ENCODE measurements at regions of chr3 and their contacts with region 1.

Region 1: GRCh38 chr3:184289426-184289938 is 9.6 kb upstream of the PSMD2 start:
- DNase-seq: peak; percentile 59
- H3K4me3 ChIP-seq: no peak overlapping the region
- H3K27ac ChIP-seq: no peak overlapping the region
- H3K4me1 ChIP-seq: no peaks in the 10 kb centered on the region
- H3K27me3 ChIP-seq: no peaks in the 10 kb centered on the region
- CTCF ChIP-seq: peak; percentile 60 to 77

Region 2: DNA sequence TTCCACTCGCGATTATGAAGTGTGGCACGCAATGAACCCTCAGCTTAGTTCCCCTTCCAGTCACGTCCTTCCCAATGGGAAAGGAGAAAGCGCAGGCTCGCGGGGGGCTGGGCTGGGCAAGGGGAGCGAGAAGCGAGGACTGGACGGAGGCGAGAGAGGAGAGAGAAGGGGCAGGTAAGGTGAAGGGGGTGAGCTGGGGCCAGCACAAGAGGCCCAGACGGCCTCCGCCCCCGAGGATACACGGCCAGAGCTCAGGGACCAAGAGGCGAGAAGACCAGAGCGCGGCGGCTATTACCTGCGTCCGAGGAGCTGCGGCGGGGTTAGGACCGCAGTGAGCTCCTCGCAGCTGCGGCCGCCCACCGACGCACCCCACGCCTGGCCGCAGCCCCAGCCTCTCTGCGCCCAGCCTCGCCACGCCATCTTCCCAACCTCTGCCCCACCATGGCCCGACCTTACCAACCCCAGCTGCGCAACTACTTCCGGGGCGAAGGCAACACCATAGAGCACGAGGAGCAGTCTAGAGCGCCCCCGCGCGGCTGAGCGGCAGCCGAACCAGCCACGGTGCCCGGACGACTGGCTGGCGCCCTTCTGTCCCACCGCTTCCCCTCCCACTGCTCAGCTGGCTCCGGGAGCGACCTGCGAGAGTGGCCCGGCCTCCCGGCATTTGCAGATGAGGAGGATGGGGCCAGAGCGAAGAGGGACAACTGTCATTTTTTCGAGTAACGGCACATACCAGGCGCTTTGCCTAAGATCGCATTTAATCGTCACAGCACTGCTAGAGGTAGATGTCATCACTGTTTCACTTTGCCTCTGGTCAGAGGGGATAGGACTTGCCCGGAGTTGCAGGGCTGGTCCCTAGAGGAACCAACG is 404.8 kb before region 1 on chr3 and contains the start of gene PARL:
- CTCF ChIA-PET with region 1: no interaction called
- dilution Hi-C with region 1: no loop called
- in situ Hi-C with region 1: no loop called
- intact Hi-C with region 1: loop called (anchors 2 kb)
- DNase-seq: peak; percentile 84
- H3K4me3 ChIP-seq: peak within 1 kb of the TSS; percentile 76 to 98 (median 93)
- H3K27ac ChIP-seq: peak within 1 kb of the TSS; percentile 60
- H3K4me1 ChIP-seq: peaks cover 7% of the 10 kb centered on the region
- H3K27me3 ChIP-seq: no peaks in the 10 kb centered on the region
- CTCF ChIP-seq: peak; percentile 72 to 95
- total RNA-seq, gene PARL: 33.0 to 70.4 TPM

Region 3: DNA sequence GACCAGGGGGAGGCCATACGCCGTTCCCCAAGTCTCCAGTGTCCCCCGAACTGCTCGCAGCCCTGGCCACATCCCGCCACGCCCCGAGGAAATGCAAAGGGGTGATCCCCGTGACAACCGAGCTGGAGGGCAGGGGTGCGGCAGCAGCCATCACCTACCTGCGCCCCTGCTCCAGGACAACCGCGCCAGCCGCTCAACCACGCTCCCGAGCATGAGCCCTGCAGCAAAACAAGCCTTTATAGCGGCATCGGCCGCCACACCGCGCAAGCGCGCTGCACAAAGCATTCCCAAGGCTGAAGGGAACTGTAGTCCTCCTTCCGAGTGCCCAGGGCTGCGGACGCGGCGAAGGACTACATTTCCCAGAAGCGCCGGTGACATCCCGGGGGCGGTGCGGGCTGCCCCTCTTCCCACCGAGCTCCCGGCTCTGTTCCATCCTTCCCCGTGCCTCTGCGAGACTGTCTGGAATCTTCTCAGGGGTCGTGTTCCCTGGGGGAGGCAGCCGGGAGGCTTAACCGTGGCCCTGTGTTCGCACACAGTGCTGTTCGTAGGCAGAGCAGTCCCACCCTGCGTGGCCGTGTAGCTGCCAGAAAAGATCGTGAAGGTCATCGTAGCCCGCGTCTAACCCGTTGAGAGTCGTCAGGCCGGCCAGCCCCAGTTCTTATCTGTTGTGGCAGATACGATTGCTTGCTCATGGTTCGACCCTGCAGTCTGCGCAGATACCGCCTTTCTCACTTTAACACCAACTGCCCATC is 271.6 kb before region 1 on chr3 and contains the start of gene ABCC5:
- CTCF ChIA-PET with region 1: no interaction called
- dilution Hi-C with region 1: no loop called
- in situ Hi-C with region 1: no loop called
- intact Hi-C with region 1: loop called (anchors 10 kb)
- DNase-seq: peak; percentile 87
- H3K4me3 ChIP-seq: peak within 1 kb of the TSS; percentile 97 to 100 (median 100)
- H3K27ac ChIP-seq: peak within 1 kb of the TSS; percentile 35
- H3K4me1 ChIP-seq: peaks cover 17% of the 10 kb centered on the region
- H3K27me3 ChIP-seq: no peaks in the 10 kb centered on the region
- CTCF ChIP-seq: no peak
- total RNA-seq, gene ABCC5: 17.3 to 24.1 TPM

Region 4: GRCh38 chr3:184040010-184040409 is 249.5 kb before region 1 on chr3:
- CTCF ChIA-PET with region 1: no interaction called
- dilution Hi-C with region 1: no loop called
- in situ Hi-C with region 1: no loop called
- intact Hi-C with region 1: loop called (anchors 1 kb)
- DNase-seq: peak; percentile 35
- H3K4me3 ChIP-seq: no peak overlapping the region
- H3K27ac ChIP-seq: no peak overlapping the region
- H3K4me1 ChIP-seq: no peaks in the 10 kb centered on the region
- H3K27me3 ChIP-seq: no peaks in the 10 kb centered on the region
- CTCF ChIP-seq: peak; percentile 49 to 56

Region 5: GRCh38 chr3:184085389-184085852 is 204.1 kb before region 1 on chr3:
- CTCF ChIA-PET with region 1: no interaction called
- dilution Hi-C with region 1: no loop called
- in situ Hi-C with region 1: no loop called
- intact Hi-C with region 1: no loop called
- DNase-seq: peak; percentile 90
- H3K4me3 ChIP-seq: no peak overlapping the region
- H3K27ac ChIP-seq: no peak overlapping the region
- H3K4me1 ChIP-seq: peaks cover 8% of the 10 kb centered on the region
- H3K27me3 ChIP-seq: no peaks in the 10 kb centered on the region
- CTCF ChIP-seq: no peak

Region 6: DNA sequence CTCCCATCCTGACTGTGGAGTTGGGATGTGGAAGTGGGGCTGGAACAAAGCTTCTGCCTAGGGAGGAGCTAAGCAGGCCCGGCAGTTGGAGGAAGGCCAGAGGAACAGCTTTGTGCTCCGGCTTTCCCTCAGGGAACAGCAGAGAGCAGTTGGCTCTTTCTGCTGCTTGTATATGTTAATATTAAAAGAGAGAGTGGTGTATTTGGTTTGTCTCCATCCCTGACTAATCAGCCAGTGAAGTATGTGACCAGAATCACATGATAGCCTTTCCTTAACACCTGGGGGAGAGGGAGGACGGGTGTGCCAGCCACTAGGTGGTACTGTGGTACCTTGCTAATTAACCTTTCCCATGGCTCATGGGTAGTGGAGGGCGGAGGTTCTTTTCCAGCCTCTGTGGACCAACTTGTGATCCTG is 144.4 kb before region 1 on chr3:
- CTCF ChIA-PET with region 1: no interaction called
- dilution Hi-C with region 1: no loop called
- in situ Hi-C with region 1: no loop called
- intact Hi-C with region 1: loop called (anchors 1 kb)
- DNase-seq: peak; percentile 67
- H3K4me3 ChIP-seq: no peak overlapping the region
- H3K27ac ChIP-seq: no peak overlapping the region
- H3K4me1 ChIP-seq: no peaks in the 10 kb centered on the region
- H3K27me3 ChIP-seq: no peaks in the 10 kb centered on the region
- CTCF ChIP-seq: peak; percentile 74 to 80

Region 7: GRCh38 chr3:184229394-184230080 is 59.9 kb before region 1 on chr3 and contains the start of gene VWA5B2:
- CTCF ChIA-PET with region 1: interaction called, 3 read pairs
- dilution Hi-C with region 1: loop called (anchors 5 kb)
- in situ Hi-C with region 1: no loop called
- intact Hi-C with region 1: loop called (anchors 1 kb)
- DNase-seq: peak; percentile 43
- H3K4me3 ChIP-seq: peak within 1 kb of the TSS in 2 of 3 experiments; percentile 29 to 32
- H3K27ac ChIP-seq: no peak within 1 kb of the TSS
- H3K4me1 ChIP-seq: peaks cover 29% of the 10 kb centered on the region
- H3K27me3 ChIP-seq: peaks cover 30% of the 10 kb centered on the region
- CTCF ChIP-seq: no peak
- total RNA-seq, gene VWA5B2: 0.19 to 0.33 TPM

Region 8: DNA sequence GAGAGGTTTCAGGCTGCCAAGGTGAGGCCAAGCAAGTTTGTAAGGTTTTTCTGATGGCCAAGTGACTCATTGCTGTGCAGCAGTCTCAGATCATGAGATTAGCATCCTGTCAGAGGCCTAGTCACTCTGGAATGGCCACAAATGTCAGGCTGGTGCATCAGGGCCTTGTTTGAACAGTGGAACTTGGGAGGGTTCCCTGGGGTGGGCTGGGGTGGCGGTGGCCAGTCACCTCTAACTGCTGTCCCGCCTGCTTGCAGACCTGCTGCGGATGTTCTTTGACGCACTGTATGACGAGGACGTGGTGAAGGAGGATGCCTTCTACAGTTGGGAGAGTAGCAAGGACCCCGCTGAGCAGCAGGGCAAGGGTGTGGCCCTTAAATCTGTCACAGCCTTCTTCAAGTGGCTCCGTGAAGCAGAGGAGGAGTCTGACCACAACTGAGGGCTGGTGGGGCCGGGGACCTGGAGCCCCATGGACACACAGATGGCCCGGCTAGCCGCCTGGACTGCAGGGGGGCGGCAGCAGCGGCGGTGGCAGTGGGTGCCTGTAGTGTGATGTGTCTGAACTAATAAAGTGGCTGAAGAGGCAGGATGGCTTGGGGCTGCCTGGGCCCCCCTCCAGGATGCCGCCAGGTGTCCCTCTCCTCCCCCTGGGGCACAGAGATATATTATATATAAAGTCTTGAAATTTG is 45.1 kb after region 1 on chr3:
- CTCF ChIA-PET with region 1: no interaction called
- dilution Hi-C with region 1: no loop called
- in situ Hi-C with region 1: no loop called
- intact Hi-C with region 1: no loop called
- DNase-seq: peak; percentile 88
- H3K4me3 ChIP-seq: no peak overlapping the region
- H3K27ac ChIP-seq: peak overlapping the region; percentile 81
- H3K4me1 ChIP-seq: peaks cover 76% of the 10 kb centered on the region
- H3K27me3 ChIP-seq: no peaks in the 10 kb centered on the region
- CTCF ChIP-seq: no peak

Region 9: GRCh38 chr3:184371570-184372018 is 82.1 kb after region 1 on chr3:
- CTCF ChIA-PET with region 1: no interaction called
- dilution Hi-C with region 1: no loop called
- in situ Hi-C with region 1: no loop called
- intact Hi-C with region 1: no loop called
- DNase-seq: peak; percentile 73
- H3K4me3 ChIP-seq: no peak overlapping the region
- H3K27ac ChIP-seq: no peak overlapping the region
- H3K4me1 ChIP-seq: peaks cover 4% of the 10 kb centered on the region
- H3K27me3 ChIP-seq: no peaks in the 10 kb centered on the region
- CTCF ChIP-seq: peak; percentile 98 to 99

Region 10: DNA sequence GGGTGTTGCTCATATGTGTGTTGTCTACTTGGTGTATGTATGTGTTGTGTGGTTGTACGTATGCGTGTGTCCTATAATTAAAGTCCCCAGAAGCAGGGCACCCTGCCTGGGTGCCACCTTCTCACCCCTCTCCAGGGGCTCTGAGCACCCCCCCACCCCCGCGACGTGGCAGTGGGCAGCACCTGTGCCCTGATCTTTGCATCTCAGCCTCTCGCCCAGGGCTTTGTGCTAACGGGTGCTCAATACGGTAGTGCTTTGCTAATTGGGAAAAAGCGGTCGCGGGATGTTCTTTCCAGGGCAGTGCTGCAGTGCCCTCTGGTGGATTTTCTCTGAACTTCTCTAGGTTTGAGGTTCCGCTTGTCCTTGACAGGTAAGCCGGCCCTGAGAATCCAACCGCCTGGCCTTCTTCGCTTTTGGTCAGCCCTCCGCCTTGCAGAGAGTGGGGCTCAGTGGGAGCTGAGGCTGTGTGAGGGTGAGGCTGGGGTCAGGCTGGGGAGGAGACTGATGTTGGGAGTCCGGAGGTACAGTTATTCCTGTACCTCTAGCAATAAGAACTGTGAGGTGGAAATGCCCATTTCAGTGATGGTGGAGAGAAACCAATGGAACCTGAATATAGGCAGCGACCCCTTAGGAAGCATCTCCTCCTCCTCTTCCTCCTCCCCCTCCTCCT is 254.5 kb after region 1 on chr3:
- CTCF ChIA-PET with region 1: no interaction called
- dilution Hi-C with region 1: no loop called
- in situ Hi-C with region 1: no loop called
- intact Hi-C with region 1: loop called (anchors 5 kb)
- DNase-seq: peak; percentile 72
- H3K4me3 ChIP-seq: no peak overlapping the region
- H3K27ac ChIP-seq: no peak overlapping the region
- H3K4me1 ChIP-seq: peaks cover 2% of the 10 kb centered on the region
- H3K27me3 ChIP-seq: no peaks in the 10 kb centered on the region
- CTCF ChIP-seq: peak; percentile 84 to 86

Region 11: GRCh38 chr3:184711493-184712247 is 422.2 kb after region 1 on chr3 and contains the start of gene MAGEF1:
- CTCF ChIA-PET with region 1: no interaction called
- dilution Hi-C with region 1: no loop called
- in situ Hi-C with region 1: no loop called
- intact Hi-C with region 1: no loop called
- DNase-seq: peak; percentile 77
- H3K4me3 ChIP-seq: peak within 1 kb of the TSS; percentile 74 to 90 (median 83)
- H3K27ac ChIP-seq: peak within 1 kb of the TSS; percentile 80
- H3K4me1 ChIP-seq: peaks cover 16% of the 10 kb centered on the region
- H3K27me3 ChIP-seq: no peaks in the 10 kb centered on the region
- CTCF ChIP-seq: no peak
- total RNA-seq, gene MAGEF1: 19.0 to 27.8 TPM